ENCODE measurements at regions of chr14 and their contacts with region 1.

Region 1: GRCh38 chr14:65206448-65207096 is 104.3 kb upstream of the MAX start:
- DNase-seq: peak; percentile 51
- ATAC-seq: peak; percentile 84
- H3K4me3 Mint-ChIP-seq: peak overlapping the region; percentile 55
- H3K27ac Mint-ChIP-seq: peak overlapping the region; percentile 82
- H3K4me1 Mint-ChIP-seq: peaks cover 59% of the 10 kb centered on the region
- H3K27me3 Mint-ChIP-seq: no peaks in the 10 kb centered on the region

Region 2: GRCh38 chr14:64986578-64987571 is 219.7 kb before region 1 on chr14 and contains the start of gene FNTB:
- CTCF ChIA-PET with region 1: no interaction called
- POLR2A ChIA-PET with region 1: no interaction called
- intact Hi-C with region 1: loop called in 1 of 2 experiments (anchors 5 kb)
- DNase-seq: peak; percentile 96
- ATAC-seq: peak; percentile 96
- H3K4me3 Mint-ChIP-seq: peak within 1 kb of the TSS; percentile 82
- H3K27ac Mint-ChIP-seq: peak within 1 kb of the TSS; percentile 99
- H3K4me1 Mint-ChIP-seq: peaks cover 46% of the 10 kb centered on the region
- H3K27me3 Mint-ChIP-seq: peaks cover 5% of the 10 kb centered on the region
- total RNA-seq, gene FNTB: 18.2 to 24.9 TPM

Region 3: DNA sequence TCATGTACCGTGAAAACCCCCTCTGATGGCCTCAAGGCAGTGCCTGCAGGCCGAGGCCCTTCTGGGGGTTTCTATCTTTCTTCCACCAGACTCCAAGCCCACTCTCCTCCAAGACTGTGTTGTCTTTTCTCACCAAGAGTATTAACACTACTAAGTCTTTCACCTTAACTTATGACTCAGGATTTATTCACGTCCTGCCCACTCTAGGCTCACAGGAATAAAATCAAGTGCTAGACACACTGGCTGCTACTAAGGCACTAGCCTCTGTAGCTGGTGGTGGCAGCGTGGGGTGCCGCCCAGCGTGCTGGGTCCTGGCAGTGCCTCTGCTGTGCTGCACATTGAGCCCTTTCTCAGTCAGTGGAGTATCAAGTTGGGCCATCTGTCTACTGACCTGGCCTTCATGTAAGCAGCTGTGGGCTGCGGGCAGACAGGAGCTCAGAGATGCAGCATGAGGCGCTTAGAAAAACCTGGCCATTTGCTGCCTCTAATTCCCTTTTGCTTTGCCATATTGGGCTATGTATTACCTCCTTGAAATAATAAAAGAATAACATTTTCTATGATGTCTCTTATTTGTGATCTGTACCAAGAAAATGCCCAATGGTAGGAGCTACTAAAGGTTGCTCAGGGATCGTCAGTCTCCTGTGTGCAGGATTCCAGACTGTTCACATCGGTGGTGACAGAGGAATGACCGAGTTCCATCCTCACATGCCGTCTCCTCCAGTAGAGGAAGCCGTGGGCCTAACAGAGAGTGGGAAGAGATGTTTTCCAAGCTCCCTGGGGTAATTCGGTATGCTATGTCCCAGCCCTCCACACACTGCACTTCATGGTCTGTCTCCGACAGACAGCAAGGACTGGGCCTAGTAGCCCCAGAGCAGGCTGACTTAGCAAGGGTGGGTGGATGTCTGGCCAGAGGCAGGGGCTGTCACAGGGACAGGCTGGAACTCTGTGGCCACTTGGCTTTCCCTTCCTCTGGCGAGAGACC is 144.2 kb before region 1 on chr14:
- CTCF ChIA-PET with region 1: no interaction called
- POLR2A ChIA-PET with region 1: no interaction called
- intact Hi-C with region 1: no loop called
- DNase-seq: no peak
- ATAC-seq: no peak
- H3K4me3 Mint-ChIP-seq: no peak overlapping the region
- H3K27ac Mint-ChIP-seq: no peak overlapping the region
- H3K4me1 Mint-ChIP-seq: no peaks in the 10 kb centered on the region
- H3K27me3 Mint-ChIP-seq: no peaks in the 10 kb centered on the region

Region 4: GRCh38 chr14:65170768-65171507 is 35.6 kb before region 1 on chr14:
- CTCF ChIA-PET with region 1: interaction called, 3 read pairs
- POLR2A ChIA-PET with region 1: interaction called, 5 read pairs
- intact Hi-C with region 1: loop called (anchors 1 to 5 kb)
- DNase-seq: peak; percentile 73
- ATAC-seq: peak; percentile 84
- H3K4me3 Mint-ChIP-seq: peak overlapping the region; percentile 71
- H3K27ac Mint-ChIP-seq: peak overlapping the region; percentile 76
- H3K4me1 Mint-ChIP-seq: peaks cover 19% of the 10 kb centered on the region
- H3K27me3 Mint-ChIP-seq: peaks cover 9% of the 10 kb centered on the region

Region 5: DNA sequence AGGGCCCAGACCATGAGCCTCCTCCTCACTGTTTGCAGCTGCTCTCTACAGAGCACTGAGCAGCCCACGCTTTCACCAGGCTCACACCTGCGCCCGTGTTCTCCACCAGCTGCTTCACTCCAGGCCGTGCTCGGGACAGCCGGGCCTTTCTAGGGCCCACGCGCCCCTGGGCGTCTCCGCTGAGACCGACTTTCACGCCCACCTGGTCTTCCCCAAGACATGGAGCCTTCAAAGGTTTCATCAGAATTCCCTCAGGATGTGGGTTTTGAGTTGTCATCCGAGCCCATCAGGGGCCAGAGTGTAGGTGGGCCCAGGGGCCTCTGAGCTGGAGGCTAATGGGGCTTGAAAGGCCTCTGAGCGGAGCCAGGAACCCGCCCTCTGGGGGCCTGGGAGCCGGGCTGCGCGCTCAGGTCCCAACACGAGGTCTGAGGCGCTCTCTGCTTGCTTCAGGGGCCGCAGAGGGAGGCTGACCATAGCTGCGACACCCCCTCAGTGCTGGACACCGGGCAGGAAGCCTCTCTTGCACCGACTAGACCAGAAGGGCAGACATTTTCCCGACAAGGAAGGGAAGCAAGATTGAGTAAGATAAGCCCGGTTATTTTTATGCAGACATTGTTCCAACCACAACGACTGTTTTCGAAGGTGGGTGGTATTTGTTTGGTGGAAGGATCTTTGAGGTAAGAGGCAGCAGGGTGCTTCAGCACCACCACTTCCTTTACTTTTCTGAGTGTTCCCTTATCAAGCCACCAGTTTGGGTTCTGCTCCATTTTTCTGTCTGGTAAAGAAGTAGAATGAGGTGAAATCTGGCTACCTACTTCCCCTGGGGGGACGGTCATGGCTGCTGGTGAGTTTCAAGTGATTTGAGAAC is 80.9 kb after region 1 on chr14:
- CTCF ChIA-PET with region 1: interaction called, 3 read pairs
- POLR2A ChIA-PET with region 1: interaction called, 5 read pairs
- intact Hi-C with region 1: loop called (anchors 1 to 5 kb)
- DNase-seq: peak; percentile 78
- ATAC-seq: peak; percentile 66
- H3K4me3 Mint-ChIP-seq: peak overlapping the region; percentile 65
- H3K27ac Mint-ChIP-seq: peak overlapping the region; percentile 98
- H3K4me1 Mint-ChIP-seq: peaks cover 70% of the 10 kb centered on the region
- H3K27me3 Mint-ChIP-seq: no peaks in the 10 kb centered on the region

Region 6: GRCh38 chr14:65847075-65847847 is 640.7 kb after region 1 on chr14:
- CTCF ChIA-PET with region 1: no interaction called
- POLR2A ChIA-PET with region 1: interaction called, 3 read pairs
- intact Hi-C with region 1: loop called in 1 of 2 experiments (anchors 2 kb)
- DNase-seq: peak; percentile 80
- ATAC-seq: peak; percentile 82
- H3K4me3 Mint-ChIP-seq: peak overlapping the region; percentile 45
- H3K27ac Mint-ChIP-seq: peak overlapping the region; percentile 72
- H3K4me1 Mint-ChIP-seq: peaks cover 66% of the 10 kb centered on the region
- H3K27me3 Mint-ChIP-seq: no peaks in the 10 kb centered on the region

Region 7: DNA sequence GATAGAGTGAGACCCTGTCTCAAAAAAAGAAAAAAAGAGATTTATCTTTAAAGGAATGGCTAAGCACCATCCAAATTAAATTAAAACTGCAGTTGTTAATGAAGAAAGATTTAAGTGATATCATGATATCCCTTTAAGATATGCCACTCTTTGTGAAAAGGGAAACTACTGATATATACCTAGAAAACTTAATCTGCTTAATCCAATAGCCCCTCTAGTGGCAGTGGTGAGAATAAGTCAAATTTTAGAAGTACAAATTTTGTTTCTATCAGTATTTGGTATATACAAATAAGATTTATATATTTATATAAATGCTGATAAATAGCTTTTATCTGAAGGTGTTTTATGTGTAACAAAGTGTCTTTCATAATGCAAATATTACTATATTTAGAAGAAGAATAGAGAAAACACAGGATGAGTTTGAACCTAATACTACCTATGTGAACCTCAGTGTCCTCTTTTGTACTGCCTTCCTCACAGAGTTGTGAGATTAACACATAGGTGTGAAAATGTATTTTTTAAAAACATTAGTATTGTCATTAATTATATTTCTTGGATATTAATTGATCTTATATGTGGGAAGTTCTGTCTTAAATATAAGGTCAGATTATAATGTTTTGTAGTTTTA is 1931.3 kb after region 1 on chr14:
- CTCF ChIA-PET with region 1: no interaction called
- POLR2A ChIA-PET with region 1: no interaction called
- intact Hi-C with region 1: loop called in 1 of 2 experiments (anchors 5 kb)
- DNase-seq: no peak
- ATAC-seq: no peak
- H3K4me3 Mint-ChIP-seq: no peak overlapping the region
- H3K27ac Mint-ChIP-seq: no peak overlapping the region
- H3K4me1 Mint-ChIP-seq: peaks cover 28% of the 10 kb centered on the region
- H3K27me3 Mint-ChIP-seq: no peaks in the 10 kb centered on the region